PC-3 (cell line): ENCODE measurements at regions of chr20 and their contacts with region 1.

Region 1: DNA sequence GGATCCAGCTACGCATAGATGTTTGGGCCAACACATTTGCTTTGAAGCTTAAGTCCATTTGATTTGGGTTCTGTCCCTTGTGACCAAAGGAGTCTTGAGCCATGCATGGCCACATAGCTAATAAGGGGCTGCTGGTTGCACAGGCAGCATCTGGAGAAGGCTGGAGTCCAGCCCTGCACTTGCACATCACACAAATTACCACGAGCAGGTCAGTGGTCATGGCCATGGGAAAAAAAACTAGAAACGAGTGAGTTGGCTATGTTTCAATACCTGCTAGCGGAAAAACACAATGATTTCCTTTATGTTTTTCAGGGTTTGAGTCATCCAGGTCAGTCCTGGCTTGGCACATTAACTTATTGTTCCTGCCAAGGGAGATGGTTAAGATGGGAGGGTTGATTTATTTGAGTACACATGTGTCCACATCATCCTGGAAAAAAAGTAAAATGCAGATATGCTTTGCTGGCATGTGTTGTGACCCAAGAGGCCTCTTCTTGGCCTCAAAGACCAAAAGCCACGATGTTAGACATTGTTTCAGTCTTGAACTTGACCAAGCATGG is 5.6 kb upstream of the STX16 start:
- DNase-seq: peak; percentile 99
- ATAC-seq: peak; percentile 76
- H3K4me3 ChIP-seq: no peak overlapping the region
- H3K27ac ChIP-seq: peak overlapping the region; percentile 86
- H3K4me1 ChIP-seq: peaks cover 52% of the 10 kb centered on the region
- H3K27me3 ChIP-seq: no peaks in the 10 kb centered on the region
- CTCF ChIP-seq: no peak

Region 2: GRCh38 chr20:58481481-58482021 is 163.9 kb before region 1 on chr20:
- CTCF ChIA-PET with region 1: interaction called, 15 read pairs
- POLR2A ChIA-PET with region 1: interaction called, 3 read pairs
- intact Hi-C with region 1: loop called (anchors 2 kb)
- DNase-seq: peak; percentile 86
- ATAC-seq: peak; percentile 89
- H3K4me3 ChIP-seq: no peak overlapping the region
- H3K27ac ChIP-seq: no peak overlapping the region
- H3K4me1 ChIP-seq: peaks cover 5% of the 10 kb centered on the region
- H3K27me3 ChIP-seq: no peaks in the 10 kb centered on the region
- CTCF ChIP-seq: peak; percentile 99

Region 3: DNA sequence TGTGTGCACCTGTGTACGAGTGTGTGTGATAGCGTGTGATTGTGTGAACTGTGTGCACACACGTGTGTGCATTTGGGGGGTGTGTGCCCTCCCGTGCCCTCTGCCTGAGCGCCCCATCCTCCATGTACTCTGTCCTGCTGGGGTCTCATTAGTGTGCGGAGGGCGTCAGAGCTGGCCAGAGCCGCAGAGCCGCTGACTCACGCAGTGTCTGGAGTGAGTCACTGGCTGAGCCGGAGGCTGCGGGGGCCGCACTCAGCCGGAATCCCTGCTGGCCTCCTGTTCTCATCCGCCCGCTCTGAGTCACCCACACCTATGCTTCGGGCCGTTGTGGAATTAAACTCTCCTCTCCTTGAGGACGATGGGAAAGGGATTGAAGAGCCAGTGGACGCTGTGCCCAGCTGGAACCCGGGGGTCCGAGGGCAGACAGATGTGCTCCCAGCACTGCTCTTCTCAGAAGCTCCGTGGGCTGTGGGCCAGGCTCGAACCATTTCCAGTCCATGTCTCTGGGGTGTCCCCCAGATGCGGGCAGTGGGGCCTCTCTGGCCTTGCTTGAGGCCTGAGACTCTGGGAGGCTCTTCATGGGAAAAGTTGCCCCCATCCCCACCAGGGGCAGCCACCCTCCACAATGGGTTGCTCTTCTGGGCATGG is 21.5 kb before region 1 on chr20:
- CTCF ChIA-PET with region 1: no interaction called
- POLR2A ChIA-PET with region 1: interaction called, 14 read pairs
- intact Hi-C with region 1: loop called (anchors 1 kb)
- DNase-seq: peak; percentile 99
- ATAC-seq: peak; percentile 97
- H3K4me3 ChIP-seq: no peak overlapping the region
- H3K27ac ChIP-seq: peak overlapping the region; percentile 95
- H3K4me1 ChIP-seq: peaks cover 31% of the 10 kb centered on the region
- H3K27me3 ChIP-seq: no peaks in the 10 kb centered on the region
- CTCF ChIP-seq: no peak

Region 4: GRCh38 chr20:58630063-58630462 is 15.4 kb before region 1 on chr20:
- CTCF ChIA-PET with region 1: no interaction called
- POLR2A ChIA-PET with region 1: interaction called, 14 read pairs
- intact Hi-C with region 1: loop called (anchors 1 kb)
- DNase-seq: peak; percentile 90
- ATAC-seq: peak; percentile 83
- H3K4me3 ChIP-seq: no peak overlapping the region
- H3K27ac ChIP-seq: peak overlapping the region; percentile 64
- H3K4me1 ChIP-seq: peaks cover 33% of the 10 kb centered on the region
- H3K27me3 ChIP-seq: no peaks in the 10 kb centered on the region
- CTCF ChIP-seq: no peak

Region 5: DNA sequence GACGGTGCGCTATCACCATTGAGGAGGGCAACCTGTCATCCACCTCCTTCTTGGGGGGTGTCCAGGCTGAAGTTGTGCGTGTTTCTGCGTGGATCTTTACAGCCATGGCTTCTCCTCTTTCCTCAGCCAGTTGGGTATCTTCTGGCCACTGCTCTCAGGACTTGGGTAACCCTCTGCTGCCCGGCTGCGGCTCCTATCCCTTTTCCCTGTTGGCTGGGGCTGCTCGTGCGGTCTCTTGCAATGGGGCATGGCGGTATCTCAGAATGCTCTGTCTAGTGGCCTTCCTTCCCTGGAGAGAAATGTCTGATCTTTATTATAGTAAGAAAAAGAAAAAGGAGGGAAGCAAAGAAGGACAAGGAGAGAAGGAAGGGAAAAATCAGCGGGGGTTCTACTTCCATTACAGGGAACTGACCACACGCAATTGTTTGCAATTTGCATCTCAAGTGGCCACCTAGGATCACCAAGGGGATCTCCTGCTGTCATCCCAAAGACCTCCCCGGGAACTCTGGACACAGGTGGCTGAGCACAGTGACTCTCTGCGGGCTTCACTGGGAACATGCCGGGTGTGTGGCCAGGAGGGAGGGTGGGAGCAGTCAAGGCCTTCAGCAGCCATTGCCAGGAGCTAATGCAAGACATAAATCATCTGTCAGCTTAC is 107.9 kb after region 1 on chr20:
- CTCF ChIA-PET with region 1: no interaction called
- POLR2A ChIA-PET with region 1: no interaction called
- intact Hi-C with region 1: no loop called
- DNase-seq: no peak
- ATAC-seq: no peak
- H3K4me3 ChIP-seq: no peak overlapping the region
- H3K27ac ChIP-seq: no peak overlapping the region
- H3K4me1 ChIP-seq: no peaks in the 10 kb centered on the region
- H3K27me3 ChIP-seq: peaks cover 96% of the 10 kb centered on the region
- CTCF ChIP-seq: no peak